Ascending aorta (tissue), 2 donors: ENCODE measurements at regions of chr12 and their contacts with region 1.

Region 1: GRCh38 chr12:25151476-25151875 is 43.5 kb downstream of the DNAI7 start:
- DNase-seq: peak; percentile 72 to 93
- H3K4me3 ChIP-seq: no peak overlapping the region
- H3K27ac ChIP-seq: peak overlapping the region; percentile 68 to 80
- H3K4me1 ChIP-seq: peaks cover 0 to 2% of the 10 kb centered on the region in 2 donors
- H3K27me3 ChIP-seq: no peaks in the 10 kb centered on the region
- CTCF ChIP-seq: no peak

Region 2: DNA sequence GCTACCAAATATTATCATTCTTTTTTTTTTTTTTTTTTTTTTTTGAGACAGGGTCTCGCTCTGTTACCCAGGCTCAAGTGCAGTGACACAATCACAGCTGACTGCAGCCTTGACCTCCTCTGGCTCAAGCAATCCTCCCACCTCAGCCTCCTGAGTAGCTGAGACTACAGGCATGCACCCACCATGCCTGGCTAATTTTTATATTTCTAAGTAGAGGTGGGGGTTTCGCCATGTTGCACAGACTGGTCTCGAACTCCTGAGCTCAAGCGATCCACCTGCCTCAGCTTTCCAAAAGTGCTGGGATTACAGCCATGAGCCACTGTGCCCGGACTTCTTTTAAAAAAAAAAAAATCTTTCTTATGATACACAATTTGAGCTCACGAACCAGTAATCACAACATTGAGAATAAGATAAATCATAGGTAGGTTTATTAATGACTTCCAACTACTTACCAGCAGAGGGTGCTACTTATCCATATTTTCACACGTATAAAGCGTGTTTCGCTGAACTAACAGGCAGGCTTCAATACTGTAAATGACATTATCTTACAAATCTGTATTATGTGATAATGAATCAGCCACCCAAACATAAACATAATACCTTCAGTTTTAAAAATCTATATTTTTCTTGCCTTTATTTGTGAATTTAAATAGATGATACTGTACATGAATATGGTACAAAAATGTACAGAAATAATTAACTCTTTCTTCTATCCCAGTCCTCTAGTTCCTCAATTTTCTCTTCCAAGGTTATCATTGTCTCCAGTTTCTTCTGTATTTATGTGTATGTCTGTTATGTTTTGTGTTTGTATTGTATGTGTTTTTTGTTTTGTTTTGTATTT is 160.0 kb before region 1 on chr12:
- intact Hi-C with region 1: loop called (anchors 2 kb)
- DNase-seq: no peak
- H3K4me3 ChIP-seq: no peak overlapping the region
- H3K27ac ChIP-seq: no peak overlapping the region
- H3K4me1 ChIP-seq: no peaks in the 10 kb centered on the region
- H3K27me3 ChIP-seq: no peaks in the 10 kb centered on the region
- CTCF ChIP-seq: peak; percentile 55 to 66 (median 64)

Region 3: GRCh38 chr12:25135531-25136154 is 15.8 kb before region 1 on chr12:
- intact Hi-C with region 1: no loop called
- DNase-seq: no peak
- H3K4me3 ChIP-seq: no peak overlapping the region
- H3K27ac ChIP-seq: no peak overlapping the region
- H3K4me1 ChIP-seq: no peaks in the 10 kb centered on the region
- H3K27me3 ChIP-seq: no peaks in the 10 kb centered on the region
- CTCF ChIP-seq: no peak

Region 4: GRCh38 chr12:25195056-25195971 is 43.8 kb after region 1 on chr12 and contains the starts of genes DNAI7 and ETFRF1:
- intact Hi-C with region 1: loop called (anchors 2 kb)
- DNase-seq: peak; percentile 90 to 99
- H3K4me3 ChIP-seq: peak within 1 kb of the TSS; percentile 84 to 85
- H3K27ac ChIP-seq: peak within 1 kb of the TSS; percentile 97
- H3K4me1 ChIP-seq: peaks cover 3 to 9% of the 10 kb centered on the region in 2 donors
- H3K27me3 ChIP-seq: no peaks in the 10 kb centered on the region
- CTCF ChIP-seq: peak in 1 of 3 experiments; percentile 9
- total RNA-seq, gene DNAI7: not detected
- total RNA-seq, gene ETFRF1: 0.85 TPM

Region 5: DNA sequence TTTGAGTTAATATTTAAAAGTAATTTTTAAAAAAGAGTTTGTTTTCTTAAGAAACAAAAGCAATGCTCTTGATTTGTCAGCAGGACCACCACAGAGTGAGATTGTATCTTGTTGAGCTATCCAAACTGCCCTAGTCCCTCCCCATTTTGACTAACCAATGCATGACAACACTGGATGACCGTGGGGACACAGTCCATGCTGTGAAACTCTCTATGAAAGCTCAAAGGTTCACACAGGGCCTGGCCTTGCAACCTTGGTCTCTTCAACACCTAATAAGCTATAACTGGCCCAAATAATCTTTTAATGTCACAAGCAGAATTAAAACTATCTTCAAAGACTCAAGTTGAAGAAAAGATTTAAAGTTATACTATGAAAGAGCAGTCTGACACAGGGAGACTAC is 57.1 kb after region 1 on chr12:
- intact Hi-C with region 1: no loop called
- DNase-seq: no peak
- H3K4me3 ChIP-seq: no peak overlapping the region
- H3K27ac ChIP-seq: no peak overlapping the region
- H3K4me1 ChIP-seq: no peaks in the 10 kb centered on the region
- H3K27me3 ChIP-seq: no peaks in the 10 kb centered on the region
- CTCF ChIP-seq: no peak